Ovary (tissue), 10 donors: ENCODE measurements at regions of chr1 and their contacts with region 1.

Region 1: GRCh38 chr1:202633384-202633783 is 76.9 kb downstream of the SYT2 start:
- DNase-seq: no peak
- H3K4me3 ChIP-seq: no peak overlapping the region
- H3K27ac ChIP-seq: no peak overlapping the region
- H3K4me1 ChIP-seq: no peaks in the 10 kb centered on the region
- H3K27me3 ChIP-seq: no peaks in the 10 kb centered on the region
- CTCF ChIP-seq: no peak
- EP300 ChIP-seq: no peak
- POLR2A ChIP-seq: no peak

Region 2: DNA sequence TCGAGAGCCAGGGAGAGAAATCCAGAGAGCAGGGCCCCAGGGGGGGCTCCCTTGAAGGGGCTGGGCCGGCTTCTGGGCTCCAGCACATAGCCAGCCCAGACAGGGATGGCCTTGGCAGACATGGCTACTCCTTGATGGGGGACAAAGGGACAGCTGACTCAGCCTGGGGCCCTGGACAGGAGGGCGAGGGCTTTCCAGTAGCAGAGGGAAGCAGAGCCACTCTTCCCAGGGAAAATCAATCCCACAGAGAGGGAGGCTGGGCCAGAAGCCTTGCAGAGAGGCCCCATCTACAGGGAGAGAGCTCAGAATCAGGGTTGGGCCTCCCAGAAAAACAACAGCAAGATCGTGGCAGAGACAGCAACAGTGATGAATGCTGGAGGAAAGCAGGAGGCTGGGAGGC is 1427.2 kb before region 1 on chr1:
- intact Hi-C with region 1: no loop called
- DNase-seq: peak in 1 of 5 donors; percentile 11
- H3K4me3 ChIP-seq: no peak overlapping the region
- H3K27ac ChIP-seq: no peak overlapping the region
- H3K4me1 ChIP-seq: no peaks in the 10 kb centered on the region
- H3K27me3 ChIP-seq: no peaks in the 10 kb centered on the region
- CTCF ChIP-seq: no peak
- EP300 ChIP-seq: no peak
- POLR2A ChIP-seq: no peak

Region 3: DNA sequence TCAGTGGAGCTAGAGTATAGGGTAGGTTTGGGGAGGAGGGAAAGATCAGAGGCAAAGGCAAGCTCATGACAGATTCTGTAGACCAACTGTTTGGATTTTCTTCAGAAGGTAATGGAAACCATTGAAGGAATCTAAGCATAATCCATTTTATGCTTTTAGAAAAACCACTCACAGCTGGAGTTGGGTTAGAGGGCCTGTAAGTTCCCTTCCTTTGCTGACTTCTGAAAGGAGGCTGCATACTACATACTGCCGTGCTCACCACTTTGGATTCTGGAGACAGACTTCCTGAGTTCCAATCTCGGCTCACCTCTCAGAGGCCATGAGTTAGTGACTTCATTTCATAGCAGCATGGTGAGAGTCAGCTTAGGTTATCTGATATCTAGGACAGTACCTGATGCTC is 83.3 kb after region 1 on chr1:
- intact Hi-C with region 1: loop called in 1 of 4 experiments (anchors 5 kb)
- DNase-seq: no peak
- H3K4me3 ChIP-seq: no peak overlapping the region
- H3K27ac ChIP-seq: no peak overlapping the region
- H3K4me1 ChIP-seq: no peaks in the 10 kb centered on the region
- H3K27me3 ChIP-seq: no peaks in the 10 kb centered on the region
- CTCF ChIP-seq: no peak
- EP300 ChIP-seq: no peak
- POLR2A ChIP-seq: no peak